Right cardiac atrium (tissue), 5 donors: ENCODE measurements at regions of chr4 and their contacts with region 1.

Region 1: DNA sequence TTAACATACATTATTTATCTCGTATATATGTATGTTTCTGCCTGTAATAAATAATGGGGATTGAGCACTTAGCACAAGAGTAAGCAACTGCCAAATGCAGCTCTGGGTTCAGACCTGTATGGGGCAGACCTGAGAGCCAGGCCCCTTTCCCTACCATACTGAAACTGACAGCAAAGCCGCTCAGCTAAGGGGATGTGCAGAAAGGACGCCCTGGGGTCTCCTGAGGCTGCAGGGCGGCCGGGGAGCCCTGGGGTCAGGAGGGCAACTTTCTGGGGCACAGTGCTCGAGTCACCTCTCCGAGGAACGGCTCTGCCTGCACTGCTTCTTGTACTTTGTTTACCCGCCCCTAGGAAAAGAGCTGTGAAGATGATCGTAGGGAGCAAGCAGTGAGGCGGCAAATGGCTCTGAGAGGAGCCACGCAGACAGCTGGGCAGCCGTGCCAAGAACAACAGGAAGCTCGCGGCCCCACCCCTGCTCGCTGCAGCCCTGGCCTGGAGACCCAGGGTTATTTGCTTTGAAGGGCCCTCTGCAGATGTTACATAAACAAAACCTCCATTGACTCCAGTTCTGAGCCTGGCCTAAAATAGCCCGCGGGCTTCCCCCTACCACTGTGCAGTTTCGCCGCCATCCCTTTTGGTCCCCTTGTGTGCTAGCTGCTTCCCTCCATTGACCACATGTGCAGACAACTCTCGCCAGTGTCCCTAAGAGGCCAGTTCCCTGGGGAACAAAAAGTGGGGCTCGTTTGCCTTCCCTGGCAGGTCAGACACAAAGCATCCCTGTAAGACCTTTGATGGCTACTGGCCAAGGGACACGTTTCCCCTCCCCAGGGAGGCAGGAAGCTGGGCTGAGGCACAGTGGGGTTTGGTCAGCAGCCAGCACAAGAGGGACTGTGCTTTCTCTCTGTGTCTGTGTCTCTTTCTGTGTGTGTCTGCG is 111.3 kb upstream of the LNX1 start:
- DNase-seq: peak; percentile 90 to 96 (median 95)
- ATAC-seq: peak; percentile 97 to 98
- H3K4me3 ChIP-seq: peak overlapping the region; percentile 22
- H3K27ac ChIP-seq: peak overlapping the region; percentile 84
- H3K4me1 ChIP-seq: no peaks in the 10 kb centered on the region
- H3K27me3 ChIP-seq: no peaks in the 10 kb centered on the region

Region 2: DNA sequence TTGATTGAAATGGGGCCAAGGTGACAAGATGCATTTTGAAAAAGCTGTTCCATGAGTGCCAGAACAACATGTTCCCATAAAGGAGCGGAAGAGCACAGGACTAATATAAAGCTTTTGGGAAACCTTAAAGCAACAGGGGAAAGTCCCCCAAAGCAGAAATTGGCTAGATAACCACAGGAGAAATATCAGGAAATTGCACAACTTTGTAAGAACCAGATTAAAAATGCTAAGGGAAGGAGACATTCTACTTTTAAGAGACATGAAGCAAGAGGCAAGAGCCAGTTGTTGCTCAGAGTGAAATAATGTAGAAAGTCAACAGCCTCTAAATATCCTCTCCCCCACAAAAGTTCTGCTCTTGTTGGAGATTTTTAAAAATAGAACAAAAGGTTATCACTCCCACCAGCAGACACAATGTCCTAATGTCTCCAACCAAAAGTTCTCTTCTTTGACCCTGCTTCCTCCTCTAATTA is 26.2 kb before region 1 on chr4:
- intact Hi-C with region 1: no loop called
- DNase-seq: no peak
- ATAC-seq: peak; percentile 82 to 90
- H3K4me3 ChIP-seq: no peak overlapping the region
- H3K27ac ChIP-seq: peak overlapping the region; percentile 5
- H3K4me1 ChIP-seq: no peaks in the 10 kb centered on the region
- H3K27me3 ChIP-seq: no peaks in the 10 kb centered on the region

Region 3: GRCh38 chr4:53908661-53909078 is 206.1 kb after region 1 on chr4:
- intact Hi-C with region 1: loop called in 1 of 4 experiments (anchors 10 kb)
- DNase-seq: peak in 1 of 3 donors; percentile 28
- ATAC-seq: peak; percentile 94 to 95
- H3K4me3 ChIP-seq: peak overlapping the region; percentile 34
- H3K27ac ChIP-seq: no peak overlapping the region
- H3K4me1 ChIP-seq: peaks cover 3% of the 10 kb centered on the region
- H3K27me3 ChIP-seq: no peaks in the 10 kb centered on the region

Region 4: GRCh38 chr4:54082168-54082567 is 379.6 kb after region 1 on chr4:
- intact Hi-C with region 1: no loop called
- DNase-seq: no peak
- ATAC-seq: peak; percentile 60 to 88
- H3K4me3 ChIP-seq: no peak overlapping the region
- H3K27ac ChIP-seq: no peak overlapping the region
- H3K4me1 ChIP-seq: no peaks in the 10 kb centered on the region
- H3K27me3 ChIP-seq: no peaks in the 10 kb centered on the region

Region 5: DNA sequence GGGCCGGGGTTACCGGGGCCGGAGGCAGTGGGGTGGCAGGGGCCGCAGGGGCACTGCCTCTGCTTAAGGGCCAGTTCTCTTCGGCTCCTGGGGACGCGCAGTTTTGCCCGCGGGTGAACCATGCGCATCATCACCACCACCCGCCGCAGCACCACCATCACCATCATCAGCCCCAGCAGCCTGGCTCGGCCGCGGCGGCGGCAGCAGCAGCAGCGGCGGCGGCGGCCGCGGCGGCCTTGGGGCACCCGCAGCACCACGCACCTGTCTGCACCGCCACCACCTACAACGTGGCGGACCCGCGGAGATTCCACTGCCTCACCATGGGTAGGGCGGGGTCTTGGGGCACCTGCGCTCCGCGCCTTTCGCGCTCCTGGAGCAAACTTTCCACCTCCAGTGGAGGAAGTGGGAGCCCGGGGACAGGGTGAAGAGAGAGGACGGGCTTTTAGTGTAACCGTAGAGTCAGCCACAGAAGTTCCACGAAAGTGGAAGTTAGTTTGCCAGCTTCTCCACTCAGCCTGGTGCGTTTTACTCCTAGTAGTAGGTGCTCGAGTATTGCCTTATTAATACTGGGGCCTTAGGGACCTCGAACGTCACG is 398.1 kb after region 1 on chr4:
- intact Hi-C with region 1: no loop called
- DNase-seq: peak in 1 of 3 donors; percentile 59
- ATAC-seq: no peak
- H3K4me3 ChIP-seq: peak overlapping the region; percentile 45
- H3K27ac ChIP-seq: no peak overlapping the region
- H3K4me1 ChIP-seq: peaks cover 12% of the 10 kb centered on the region
- H3K27me3 ChIP-seq: no peaks in the 10 kb centered on the region